ENCODE measurements at regions of chr9 and their contacts with region 1.

Region 1: GRCh38 chr9:131334629-131335367 is 45.3 kb downstream of the PLPP7 start:
- DNase-seq: no peak
- ATAC-seq: no peak
- H3K4me3 Mint-ChIP-seq: no peak overlapping the region
- H3K27ac Mint-ChIP-seq: no peak overlapping the region
- H3K4me1 Mint-ChIP-seq: peaks cover 2% of the 10 kb centered on the region
- H3K27me3 Mint-ChIP-seq: no peaks in the 10 kb centered on the region

Region 2: DNA sequence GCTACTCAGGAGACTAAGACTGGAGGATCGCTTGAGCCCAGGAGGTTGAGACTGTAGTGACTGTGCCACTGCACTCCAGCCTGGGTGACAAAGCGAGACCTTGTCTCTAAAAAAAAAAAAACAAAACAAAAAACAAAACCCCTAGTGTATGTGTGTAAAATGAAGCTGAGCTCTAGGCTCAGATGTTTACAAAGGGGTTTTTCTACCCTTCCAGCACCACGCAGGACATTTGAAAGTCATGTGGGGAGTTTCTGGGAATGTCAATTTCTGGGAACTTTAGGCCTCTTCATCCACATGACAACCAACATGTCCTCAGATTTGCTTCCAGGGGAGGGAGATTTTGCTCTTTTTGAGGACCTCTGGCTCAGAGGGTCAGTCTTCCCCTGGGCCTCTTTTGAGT is 280.9 kb before region 1 on chr9:
- CTCF ChIA-PET with region 1: interaction called, 17 read pairs
- POLR2A ChIA-PET with region 1: no interaction called
- intact Hi-C with region 1: loop called (anchors 1 kb)
- DNase-seq: no peak
- ATAC-seq: no peak
- H3K4me3 Mint-ChIP-seq: no peak overlapping the region
- H3K27ac Mint-ChIP-seq: no peak overlapping the region
- H3K4me1 Mint-ChIP-seq: no peaks in the 10 kb centered on the region
- H3K27me3 Mint-ChIP-seq: no peaks in the 10 kb centered on the region

Region 3: GRCh38 chr9:131178382-131178781 is 156.4 kb before region 1 on chr9:
- CTCF ChIA-PET with region 1: interaction called, 150 read pairs
- POLR2A ChIA-PET with region 1: interaction called, 3 read pairs
- intact Hi-C with region 1: loop called (anchors 1 kb)
- DNase-seq: peak; percentile 84
- ATAC-seq: peak; percentile 98
- H3K4me3 Mint-ChIP-seq: no peak overlapping the region
- H3K27ac Mint-ChIP-seq: no peak overlapping the region
- H3K4me1 Mint-ChIP-seq: peaks cover 2% of the 10 kb centered on the region
- H3K27me3 Mint-ChIP-seq: no peaks in the 10 kb centered on the region

Region 4: DNA sequence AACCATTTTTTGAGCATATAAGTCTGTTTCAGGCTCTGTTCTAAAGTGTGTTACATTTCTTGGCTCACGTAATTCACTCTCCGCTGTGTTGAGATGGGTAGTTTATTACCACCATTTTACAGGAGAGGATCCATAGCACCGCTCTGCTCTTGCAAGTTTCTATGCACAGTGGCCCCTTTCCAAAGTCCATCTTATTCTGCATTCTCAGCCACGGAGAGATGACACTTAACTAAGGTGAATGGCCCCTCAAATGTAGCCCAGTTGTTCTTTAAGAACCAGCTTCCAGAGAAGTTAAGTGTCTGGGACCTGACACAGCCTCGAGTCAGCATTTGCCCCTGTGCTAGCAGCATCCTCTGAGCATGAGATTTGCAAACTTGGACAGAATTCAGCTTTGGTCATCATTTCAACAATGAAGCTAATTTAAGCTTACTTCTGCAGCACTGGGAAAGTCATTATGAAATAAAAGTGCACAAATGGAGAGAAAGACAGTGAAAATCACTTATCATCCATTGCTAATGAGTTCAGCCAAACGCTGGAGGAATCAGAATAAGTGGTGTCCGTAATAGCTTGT is 120.4 kb before region 1 on chr9:
- CTCF ChIA-PET with region 1: interaction called, 16 read pairs
- POLR2A ChIA-PET with region 1: no interaction called
- intact Hi-C with region 1: no loop called
- DNase-seq: no peak
- ATAC-seq: no peak
- H3K4me3 Mint-ChIP-seq: no peak overlapping the region
- H3K27ac Mint-ChIP-seq: no peak overlapping the region
- H3K4me1 Mint-ChIP-seq: peaks cover 7% of the 10 kb centered on the region
- H3K27me3 Mint-ChIP-seq: no peaks in the 10 kb centered on the region

Region 5: DNA sequence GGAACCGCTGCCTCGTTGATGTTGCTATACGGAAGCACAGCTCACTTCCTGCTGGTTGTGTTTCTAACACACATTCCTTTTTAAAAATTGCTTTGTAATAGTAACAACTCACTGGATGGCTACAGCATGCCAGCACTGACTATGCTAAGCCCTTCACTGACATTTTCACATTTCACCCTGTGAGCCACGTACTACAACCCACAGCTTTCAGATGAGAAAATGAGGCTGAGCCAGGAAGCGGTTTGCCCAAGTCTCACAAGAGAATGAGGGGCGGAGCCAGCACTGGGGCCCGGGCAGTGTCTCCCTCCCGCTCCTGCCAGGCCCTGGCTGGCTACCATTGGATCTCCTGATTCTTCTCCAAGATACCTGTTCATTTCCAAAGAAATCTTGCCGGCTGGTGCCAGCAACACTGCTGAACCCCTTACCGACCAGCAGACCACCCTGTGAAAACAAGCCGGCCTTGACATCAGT is 96.8 kb before region 1 on chr9:
- CTCF ChIA-PET with region 1: interaction called, 8 read pairs
- POLR2A ChIA-PET with region 1: no interaction called
- intact Hi-C with region 1: loop called (anchors 5 to 10 kb)
- DNase-seq: peak; percentile 94
- ATAC-seq: peak; percentile 97
- H3K4me3 Mint-ChIP-seq: peak overlapping the region; percentile 56
- H3K27ac Mint-ChIP-seq: peak overlapping the region; percentile 95
- H3K4me1 Mint-ChIP-seq: peaks cover 45% of the 10 kb centered on the region
- H3K27me3 Mint-ChIP-seq: no peaks in the 10 kb centered on the region

Region 6: GRCh38 chr9:131323629-131324028 is 11.2 kb before region 1 on chr9:
- CTCF ChIA-PET with region 1: interaction called, 14 read pairs
- POLR2A ChIA-PET with region 1: interaction called, 3 read pairs
- intact Hi-C with region 1: no loop called
- DNase-seq: no peak
- ATAC-seq: no peak
- H3K4me3 Mint-ChIP-seq: no peak overlapping the region
- H3K27ac Mint-ChIP-seq: no peak overlapping the region
- H3K4me1 Mint-ChIP-seq: no peaks in the 10 kb centered on the region
- H3K27me3 Mint-ChIP-seq: no peaks in the 10 kb centered on the region

Region 7: DNA sequence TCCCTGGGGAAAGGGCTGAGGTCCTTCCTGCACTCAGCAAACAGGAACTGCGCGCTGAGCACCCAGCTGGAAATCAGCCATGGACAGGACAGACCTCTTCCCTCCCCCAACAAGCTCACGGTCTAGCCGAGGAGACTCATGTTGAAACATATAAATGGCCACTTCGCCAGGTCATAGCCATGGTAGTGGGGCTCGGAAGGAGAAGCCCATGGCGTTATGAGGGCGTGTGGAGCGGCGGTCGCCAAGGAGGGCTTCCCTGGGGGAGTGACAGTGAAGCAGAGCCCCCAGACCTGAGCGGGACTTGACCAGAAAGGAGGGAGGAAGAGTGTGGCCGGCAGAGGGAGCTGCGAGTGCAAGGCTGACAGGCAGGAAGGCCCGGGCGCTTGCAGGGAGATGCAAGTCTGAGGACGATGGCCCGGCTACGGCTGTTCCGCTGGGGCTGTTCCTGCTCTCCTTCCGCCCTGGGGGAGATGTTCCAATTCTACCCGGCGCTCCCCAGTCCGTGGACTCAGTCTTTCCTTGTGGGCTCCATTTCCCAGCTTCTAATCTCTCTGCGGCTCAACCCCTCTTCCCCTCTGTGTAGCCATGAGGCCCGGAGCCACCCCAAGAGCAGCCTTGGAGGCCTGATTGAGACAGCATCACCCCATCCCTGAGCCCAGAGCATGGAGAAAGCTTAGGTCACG is 15.2 kb after region 1 on chr9:
- CTCF ChIA-PET with region 1: interaction called, 11 read pairs
- POLR2A ChIA-PET with region 1: no interaction called
- intact Hi-C with region 1: no loop called
- DNase-seq: peak; percentile 96
- ATAC-seq: peak; percentile 98
- H3K4me3 Mint-ChIP-seq: peak overlapping the region; percentile 16
- H3K27ac Mint-ChIP-seq: peak overlapping the region; percentile 65
- H3K4me1 Mint-ChIP-seq: peaks cover 9% of the 10 kb centered on the region
- H3K27me3 Mint-ChIP-seq: no peaks in the 10 kb centered on the region